Activated CD4-positive, alpha-beta T cell treated with anti-CD3 and anti-CD28 coated beads, Interleukin-2, amount 10 ng/mL, durations not matched to agents 24 days and 14 days (primary cell): ENCODE measurements at regions of chr4 and their contacts with region 1.

Region 1: GRCh38 chr4:3085948-3086655 is 11.6 kb downstream of the HTT start:
- DNase-seq: no peak
- H3K4me3 Mint-ChIP-seq: no peak overlapping the region
- H3K27ac Mint-ChIP-seq: peak overlapping the region; percentile 70
- H3K4me1 Mint-ChIP-seq: peaks cover 44% of the 10 kb centered on the region
- H3K27me3 Mint-ChIP-seq: no peaks in the 10 kb centered on the region

Region 2: DNA sequence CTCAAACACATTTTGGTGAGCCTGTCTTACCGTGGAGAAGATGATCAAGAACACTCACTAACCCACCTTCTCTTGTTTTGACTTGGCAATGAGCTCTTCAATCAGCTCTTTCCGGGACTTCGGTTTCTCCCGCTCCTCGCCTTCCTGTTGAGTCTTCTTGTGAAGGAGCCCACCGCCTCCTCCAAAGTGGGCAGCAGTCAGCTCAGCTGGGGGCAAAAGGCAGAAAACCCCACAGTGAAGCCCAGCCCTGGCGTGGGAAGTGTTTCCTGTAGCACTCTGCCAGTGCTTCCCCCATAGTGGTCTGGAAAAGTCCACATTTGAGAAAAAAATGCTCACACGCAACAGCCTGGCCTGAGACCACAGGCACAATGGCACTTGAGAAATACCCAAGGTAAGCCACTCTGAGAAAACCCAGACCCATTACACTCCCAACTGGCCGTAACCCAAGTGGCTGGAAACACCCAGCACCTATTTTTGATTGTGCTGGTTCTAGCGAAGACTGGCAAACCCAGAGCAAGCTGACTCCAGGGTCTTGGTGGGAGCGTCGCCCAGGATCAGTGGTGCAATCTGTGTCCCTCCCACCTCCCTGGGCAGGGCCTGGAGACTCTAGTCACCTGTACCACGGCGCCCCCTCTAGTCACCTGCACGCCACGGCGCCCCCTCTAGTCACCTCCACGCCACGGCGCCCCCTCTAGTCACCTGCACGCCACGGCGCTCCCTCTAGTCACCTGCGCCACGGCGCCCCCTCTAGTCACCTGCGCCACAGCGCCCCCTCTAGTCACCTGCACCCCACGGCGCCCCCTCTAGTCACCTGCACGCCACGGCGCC is 131.5 kb before region 1 on chr4:
- intact Hi-C with region 1: loop called (anchors 1 kb)
- DNase-seq: peak; percentile 86
- H3K4me3 Mint-ChIP-seq: peak overlapping the region; percentile 75
- H3K27ac Mint-ChIP-seq: peak overlapping the region; percentile 99
- H3K4me1 Mint-ChIP-seq: peaks cover 63% of the 10 kb centered on the region
- H3K27me3 Mint-ChIP-seq: no peaks in the 10 kb centered on the region

Region 3: GRCh38 chr4:3201718-3202702 is 115.9 kb after region 1 on chr4:
- intact Hi-C with region 1: no loop called
- DNase-seq: peak; percentile 94
- H3K4me3 Mint-ChIP-seq: peak overlapping the region; percentile 47
- H3K27ac Mint-ChIP-seq: peak overlapping the region; percentile 96
- H3K4me1 Mint-ChIP-seq: peaks cover 37% of the 10 kb centered on the region
- H3K27me3 Mint-ChIP-seq: no peaks in the 10 kb centered on the region